Activated T-helper 2 cell treated with anti-CD3 and anti-CD28 coated beads, Interferon-gamma antibody, Interleukin-2, Interleukin-4, amounts not matched to agents 10 μg/mL and 5 μg/mL and 100 μg/mL, durations not matched to agents 14 hours and 24 hours and 36 hours (primary cell): ENCODE measurements at regions of chr2 and their contacts with region 1.

Region 1: GRCh38 chr2:197286805-197287598 is 23.6 kb downstream of the ANKRD44 start:
- DNase-seq: no peak
- H3K4me3 Mint-ChIP-seq: peak overlapping the region; percentile 65
- H3K27ac Mint-ChIP-seq: peak overlapping the region; percentile 97
- H3K4me1 Mint-ChIP-seq: peaks cover 59% of the 10 kb centered on the region
- H3K27me3 Mint-ChIP-seq: no peaks in the 10 kb centered on the region

Region 2: GRCh38 chr2:197268786-197269584 is 18.0 kb before region 1 on chr2:
- intact Hi-C with region 1: loop called (anchors 1 kb)
- DNase-seq: no peak
- H3K4me3 Mint-ChIP-seq: peak overlapping the region; percentile 34
- H3K27ac Mint-ChIP-seq: peak overlapping the region; percentile 81
- H3K4me1 Mint-ChIP-seq: peaks cover 77% of the 10 kb centered on the region
- H3K27me3 Mint-ChIP-seq: no peaks in the 10 kb centered on the region

Region 3: DNA sequence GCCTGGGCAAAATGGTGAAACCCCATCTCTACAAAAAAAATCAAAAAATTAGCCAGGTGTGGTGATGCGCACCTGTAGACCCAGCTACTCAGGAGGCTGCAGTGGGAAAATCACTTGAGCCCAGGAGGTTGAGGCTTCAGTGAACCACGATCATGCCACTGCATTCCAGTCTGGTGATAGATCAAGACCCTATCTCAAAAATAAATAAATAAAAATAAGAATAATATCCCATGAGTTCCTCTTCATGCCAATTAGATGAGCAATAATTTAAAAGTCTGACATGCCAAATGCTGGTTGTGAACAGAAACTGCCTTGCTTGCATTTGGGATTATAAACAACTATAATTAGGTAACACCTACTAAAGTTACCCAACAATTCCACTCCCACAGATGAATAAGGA is 45.6 kb after region 1 on chr2:
- intact Hi-C with region 1: no loop called
- DNase-seq: no peak
- H3K4me3 Mint-ChIP-seq: no peak overlapping the region
- H3K27ac Mint-ChIP-seq: no peak overlapping the region
- H3K4me1 Mint-ChIP-seq: peaks cover 14% of the 10 kb centered on the region
- H3K27me3 Mint-ChIP-seq: no peaks in the 10 kb centered on the region